ENCODE measurements at regions of chr1 and their contacts with region 1.

Region 1: GRCh38 chr1:29124366-29125236 is 898 bp upstream of the TMEM200B start:
- DNase-seq: peak; percentile 82 to 86
- ATAC-seq: peak; percentile 53 to 76 (median 69)
- H3K4me3 ChIP-seq: peak overlapping the region; percentile 77
- H3K27ac ChIP-seq: peak overlapping the region; percentile 73
- H3K4me1 ChIP-seq: peaks cover 6% of the 10 kb centered on the region
- H3K27me3 ChIP-seq: peaks cover 0 to 50% (median 16%) of the 10 kb centered on the region in 3 donors
- CTCF ChIP-seq: peak; percentile 62

Region 2: GRCh38 chr1:29202584-29203340 is 78.2 kb after region 1 on chr1:
- intact Hi-C with region 1: loop called in 1 of 2 experiments (anchors 5 kb)
- DNase-seq: peak; percentile 94 to 97
- ATAC-seq: peak; percentile 97 to 98 (median 98)
- H3K4me3 ChIP-seq: no peak overlapping the region
- H3K27ac ChIP-seq: peak overlapping the region; percentile 80
- H3K4me1 ChIP-seq: peaks cover 11% of the 10 kb centered on the region
- H3K27me3 ChIP-seq: no peaks in the 10 kb centered on the region
- CTCF ChIP-seq: peak; percentile 98

Measured in psoas muscle (tissue), 8 donors.